ENCODE measurements at regions of chr9 and their contacts with region 1.

Region 1: GRCh38 chr9:76557674-76558225 is 98.8 kb downstream of the GCNT1 start:
- DNase-seq: no peak
- ATAC-seq: no peak
- H3K4me3 ChIP-seq: no peak overlapping the region
- H3K27ac ChIP-seq: no peak overlapping the region
- H3K4me1 ChIP-seq: peaks cover 0 to 62% (median 0%) of the 10 kb centered on the region in 12 donors
- H3K27me3 ChIP-seq: no peaks in the 10 kb centered on the region
- CTCF ChIP-seq: no peak
- POLR2A ChIP-seq: no peak

Region 2: GRCh38 chr9:76502746-76503145 is 55.0 kb before region 1 on chr9:
- intact Hi-C with region 1: loop called in 1 of 10 experiments (anchors 10 kb)
- DNase-seq: no peak
- ATAC-seq: no peak
- H3K4me3 ChIP-seq: no peak overlapping the region
- H3K27ac ChIP-seq: no peak overlapping the region
- H3K4me1 ChIP-seq: peaks cover 0 to 10% (median 0%) of the 10 kb centered on the region in 12 donors
- H3K27me3 ChIP-seq: no peaks in the 10 kb centered on the region
- CTCF ChIP-seq: no peak
- POLR2A ChIP-seq: no peak